Vagina (tissue), 2 donors: ENCODE measurements at regions of chr16 and their contacts with region 1.

Region 1: DNA sequence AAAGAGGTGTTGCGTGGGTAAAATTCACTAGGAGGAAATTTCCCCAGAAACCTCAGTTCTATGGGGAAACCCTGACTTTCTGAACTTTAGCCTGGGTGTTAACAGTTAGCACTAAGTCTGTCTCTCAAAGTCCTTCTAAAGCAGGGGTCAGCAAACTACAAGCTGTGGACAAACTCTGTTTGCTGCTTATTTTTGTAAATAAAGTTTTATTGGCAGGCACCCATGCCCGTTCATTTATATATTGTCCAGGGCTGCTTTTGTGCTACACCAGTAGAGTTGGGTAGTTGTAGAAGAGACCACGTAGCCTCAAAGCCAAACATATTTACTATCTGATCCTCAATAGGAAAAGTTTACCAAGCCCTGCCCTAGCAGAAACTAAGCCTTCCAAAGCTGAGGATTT is 159.7 kb downstream of the USP31 start:
- DNase-seq: no peak
- H3K4me3 ChIP-seq: no peak overlapping the region
- H3K27ac ChIP-seq: no peak overlapping the region
- H3K4me1 ChIP-seq: no peaks in the 10 kb centered on the region
- H3K27me3 ChIP-seq: no peaks in the 10 kb centered on the region
- CTCF ChIP-seq: no peak
- POLR2A ChIP-seq: no peak

Region 2: DNA sequence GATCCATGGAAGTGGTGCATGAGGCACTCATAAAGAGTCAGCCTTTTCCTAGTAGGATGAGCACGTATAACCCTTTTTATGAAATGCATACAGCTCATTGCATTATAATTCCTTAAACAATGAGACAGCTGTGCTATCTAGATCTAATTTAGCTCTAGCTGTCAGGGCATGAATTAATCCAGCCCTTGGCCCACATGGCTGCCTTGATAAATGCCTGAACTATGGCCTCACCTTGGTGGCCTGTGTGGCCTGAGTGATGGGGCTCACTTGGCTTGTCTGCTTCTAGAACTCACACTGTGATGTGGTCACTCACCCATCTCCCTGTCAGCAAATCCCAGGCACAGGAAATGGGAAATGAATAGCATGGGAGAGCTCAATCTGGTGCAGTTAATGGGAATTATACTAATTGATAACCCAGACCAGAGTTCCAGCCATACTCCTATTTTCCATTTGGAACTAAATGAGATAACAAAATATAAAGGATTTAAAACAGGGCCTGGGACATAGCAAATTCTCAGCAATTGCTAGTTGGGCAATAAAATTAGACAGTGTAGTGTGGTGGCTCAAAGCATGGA is 22.0 kb before region 1 on chr16:
- intact Hi-C with region 1: loop called (anchors 2 kb)
- DNase-seq: peak in 1 of 2 donors; percentile 19
- H3K4me3 ChIP-seq: no peak overlapping the region
- H3K27ac ChIP-seq: no peak overlapping the region
- H3K4me1 ChIP-seq: no peaks in the 10 kb centered on the region
- H3K27me3 ChIP-seq: no peaks in the 10 kb centered on the region
- CTCF ChIP-seq: no peak
- POLR2A ChIP-seq: no peak